Sigmoid colon (tissue), 7 donors: ENCODE measurements at regions of chr10 and their contacts with region 1.

Region 1: DNA sequence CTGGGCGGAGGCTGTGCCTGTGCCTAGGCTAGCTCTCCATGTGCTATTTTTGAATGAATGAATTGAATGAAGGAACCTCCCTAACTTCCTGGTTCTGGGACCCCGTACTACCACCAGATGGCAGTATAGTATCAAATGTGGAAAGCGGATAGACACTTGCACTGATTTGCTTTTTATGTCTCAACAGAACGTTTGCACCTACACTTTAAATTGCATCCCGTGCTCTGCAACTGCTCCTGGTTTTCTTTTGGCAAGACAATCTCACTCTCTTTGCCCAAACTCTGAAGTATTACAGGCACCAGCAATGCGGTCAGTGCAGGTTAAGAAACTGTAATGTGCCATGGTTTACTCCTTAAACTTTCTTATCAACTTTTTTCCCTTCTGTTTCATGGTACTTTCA is 6.5 kb downstream of the FZD8 start:
- DNase-seq: no peak
- H3K4me3 ChIP-seq: no peak overlapping the region
- H3K27ac ChIP-seq: peak overlapping the region in 2 of 4 donors; percentile 24 to 66
- H3K4me1 ChIP-seq: peaks cover 0 to 47% (median 30%) of the 10 kb centered on the region in 4 donors
- H3K27me3 ChIP-seq: no peaks in the 10 kb centered on the region
- CTCF ChIP-seq: peak; percentile 86 to 94 (median 88)
- EP300 ChIP-seq: no peak
- POLR2A ChIP-seq: no peak

Region 2: GRCh38 chr10:35379226-35380137 is 256.1 kb before region 1 on chr10:
- intact Hi-C with region 1: no loop called
- DNase-seq: no peak
- H3K4me3 ChIP-seq: no peak overlapping the region
- H3K27ac ChIP-seq: peak overlapping the region; percentile 28 to 61 (median 46)
- H3K4me1 ChIP-seq: peaks cover 0 to 57% (median 39%) of the 10 kb centered on the region in 4 donors
- H3K27me3 ChIP-seq: no peaks in the 10 kb centered on the region
- CTCF ChIP-seq: no peak
- EP300 ChIP-seq: peak in 1 of 4 donors; percentile 46
- POLR2A ChIP-seq: no peak

Region 3: GRCh38 chr10:35585903-35586535 is 49.6 kb before region 1 on chr10:
- intact Hi-C with region 1: no loop called
- DNase-seq: no peak
- H3K4me3 ChIP-seq: no peak overlapping the region
- H3K27ac ChIP-seq: no peak overlapping the region
- H3K4me1 ChIP-seq: no peaks in the 10 kb centered on the region
- H3K27me3 ChIP-seq: no peaks in the 10 kb centered on the region
- CTCF ChIP-seq: no peak
- EP300 ChIP-seq: no peak
- POLR2A ChIP-seq: no peak

Region 4: GRCh38 chr10:36114913-36115312 is 479.3 kb after region 1 on chr10:
- intact Hi-C with region 1: loop called (anchors 5 kb)
- DNase-seq: no peak
- H3K4me3 ChIP-seq: no peak overlapping the region
- H3K27ac ChIP-seq: no peak overlapping the region
- H3K4me1 ChIP-seq: peaks cover 0 to 62% (median 50%) of the 10 kb centered on the region in 4 donors
- H3K27me3 ChIP-seq: no peaks in the 10 kb centered on the region
- CTCF ChIP-seq: no peak
- EP300 ChIP-seq: no peak
- POLR2A ChIP-seq: no peak

Region 5: GRCh38 chr10:36446881-36447280 is 811.3 kb after region 1 on chr10:
- intact Hi-C with region 1: loop called (anchors 10 kb)
- DNase-seq: peak; percentile 81
- H3K4me3 ChIP-seq: no peak overlapping the region
- H3K27ac ChIP-seq: peak overlapping the region in 3 of 4 donors; percentile 5 to 59 (median 41)
- H3K4me1 ChIP-seq: peaks cover 0 to 35% (median 11%) of the 10 kb centered on the region in 4 donors
- H3K27me3 ChIP-seq: no peaks in the 10 kb centered on the region
- CTCF ChIP-seq: no peak
- EP300 ChIP-seq: peak in 1 of 4 donors; percentile 28
- POLR2A ChIP-seq: no peak

Region 6: GRCh38 chr10:36779234-36779846 is 1143.8 kb after region 1 on chr10:
- intact Hi-C with region 1: loop called (anchors 1 kb)
- DNase-seq: no peak
- H3K4me3 ChIP-seq: no peak overlapping the region
- H3K27ac ChIP-seq: no peak overlapping the region
- H3K4me1 ChIP-seq: no peaks in the 10 kb centered on the region
- H3K27me3 ChIP-seq: no peaks in the 10 kb centered on the region
- CTCF ChIP-seq: peak; percentile 74 to 87 (median 82)
- EP300 ChIP-seq: no peak
- POLR2A ChIP-seq: no peak

Region 7: DNA sequence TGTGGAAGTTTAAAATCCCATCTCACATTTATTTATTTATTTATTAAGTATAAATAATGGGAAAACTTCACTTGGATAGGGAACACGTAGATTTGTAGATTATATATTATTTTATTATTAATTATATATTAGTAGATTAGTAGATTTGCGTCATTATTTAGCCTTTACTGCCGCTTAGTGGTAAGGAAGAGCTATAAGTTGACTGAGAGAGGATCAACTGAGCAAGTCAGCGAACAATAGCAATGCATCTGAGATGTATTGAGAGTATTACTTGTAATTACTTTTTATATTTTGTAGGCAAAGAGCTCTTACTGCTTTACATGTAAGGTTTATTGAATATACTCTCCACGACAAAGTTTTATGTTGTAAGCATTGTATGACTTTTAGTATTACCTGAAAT is 1245.3 kb after region 1 on chr10:
- intact Hi-C with region 1: loop called (anchors 5 kb)
- DNase-seq: no peak
- H3K4me3 ChIP-seq: no peak overlapping the region
- H3K27ac ChIP-seq: no peak overlapping the region
- H3K4me1 ChIP-seq: no peaks in the 10 kb centered on the region
- H3K27me3 ChIP-seq: no peaks in the 10 kb centered on the region
- CTCF ChIP-seq: peak in 3 of 4 experiments; percentile 44 to 49 (median 45)
- EP300 ChIP-seq: no peak
- POLR2A ChIP-seq: no peak